ENCODE measurements at regions of chr19 and their contacts with region 1.

Region 1: GRCh38 chr19:8149261-8150094 is at the start of gene FBN3:
- DNase-seq: no peak
- ATAC-seq: no peak
- H3K4me3 ChIP-seq: peak within 1 kb of the TSS in 2 of 5 experiments; percentile 21 to 24
- H3K4me3 Mint-ChIP-seq: peak within 1 kb of the TSS; percentile 73
- H3K27ac ChIP-seq: no peak within 1 kb of the TSS
- H3K27ac Mint-ChIP-seq: peak within 1 kb of the TSS; percentile 6
- H3K4me1 ChIP-seq: peaks cover 8 to 16% of the 10 kb centered on the region in 2 donors
- H3K4me1 Mint-ChIP-seq: peaks cover 16% of the 10 kb centered on the region
- H3K27me3 ChIP-seq: peaks cover 0 to 60% (median 20%) of the 10 kb centered on the region in 4 experiments
- H3K27me3 Mint-ChIP-seq: peaks cover 54% of the 10 kb centered on the region
- CTCF ChIP-seq: no peak
- total RNA-seq, gene FBN3: not detected in 2 replicates

Region 2: DNA sequence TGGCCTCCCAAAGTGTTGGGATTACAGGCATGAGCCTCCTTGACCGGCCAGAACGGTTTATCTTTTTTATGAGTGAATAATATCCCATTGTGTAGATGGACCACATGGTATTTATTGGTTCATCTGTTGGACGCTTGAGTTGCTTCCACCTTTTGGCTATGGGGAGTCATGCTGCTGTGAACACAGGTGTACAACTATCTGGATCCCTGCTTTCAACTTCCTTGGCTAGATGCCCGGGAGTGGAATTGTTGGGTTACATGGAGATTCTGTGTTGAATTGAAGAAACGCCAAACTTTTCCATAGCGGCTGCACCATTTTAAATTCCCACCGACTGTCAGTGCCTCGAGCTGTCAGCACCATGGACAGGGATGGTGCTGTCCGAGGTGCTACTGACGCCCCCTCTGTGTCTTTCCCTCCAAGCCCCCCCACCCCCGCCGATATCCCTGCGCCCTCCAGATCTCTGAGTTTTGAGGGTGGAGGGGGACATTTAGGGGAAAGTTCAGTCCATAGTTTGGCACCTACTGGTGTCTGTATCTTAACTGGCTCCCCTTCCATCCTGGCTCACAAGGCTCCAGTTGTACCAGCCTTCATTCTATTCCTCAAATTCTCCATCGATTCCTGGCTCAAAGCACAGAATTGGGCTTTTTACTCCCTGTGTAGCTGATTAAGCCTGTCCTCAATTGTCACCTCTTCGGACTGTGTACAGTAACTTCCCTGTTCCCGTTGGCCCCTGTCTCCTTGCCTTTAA is 586.7 kb before region 1 on chr19:
- CTCF ChIA-PET with region 1: interaction called, 3 read pairs
- POLR2A ChIA-PET with region 1: no interaction called
- intact Hi-C with region 1: loop called (anchors 5 kb)
- DNase-seq: peak; percentile 19
- ATAC-seq: no peak
- H3K4me3 ChIP-seq: no peak overlapping the region
- H3K4me3 Mint-ChIP-seq: no peak overlapping the region
- H3K27ac ChIP-seq: no peak overlapping the region
- H3K27ac Mint-ChIP-seq: no peak overlapping the region
- H3K4me1 ChIP-seq: no peaks in the 10 kb centered on the region
- H3K4me1 Mint-ChIP-seq: no peaks in the 10 kb centered on the region
- H3K27me3 ChIP-seq: no peaks in the 10 kb centered on the region
- H3K27me3 Mint-ChIP-seq: no peaks in the 10 kb centered on the region
- CTCF ChIP-seq: no peak

Measured in B cell (primary cell).